Thyroid gland (tissue), 4 donors: ENCODE measurements at regions of chr7 and their contacts with region 1.

Region 1: GRCh38 chr7:2863461-2864066 is 19.5 kb upstream of the GNA12 start:
- DNase-seq: peak; percentile 43 to 44
- H3K4me3 ChIP-seq: no peak overlapping the region
- H3K27ac ChIP-seq: peak overlapping the region; percentile 55 to 79 (median 79)
- H3K4me1 ChIP-seq: peaks cover 0 to 20% of the 10 kb centered on the region in 2 donors
- H3K27me3 ChIP-seq: no peaks in the 10 kb centered on the region
- CTCF ChIP-seq: no peak
- POLR2A ChIP-seq: no peak

Region 2: GRCh38 chr7:3154912-3155494 is 291.4 kb after region 1 on chr7:
- intact Hi-C with region 1: loop called (anchors 10 kb)
- DNase-seq: peak in 1 of 2 donors; percentile 3
- H3K4me3 ChIP-seq: no peak overlapping the region
- H3K27ac ChIP-seq: no peak overlapping the region
- H3K4me1 ChIP-seq: no peaks in the 10 kb centered on the region
- H3K27me3 ChIP-seq: no peaks in the 10 kb centered on the region
- CTCF ChIP-seq: peak in 4 of 6 experiments; percentile 25 to 42 (median 28)
- POLR2A ChIP-seq: no peak